ENCODE measurements at regions of chr12 and their contacts with region 1.

Region 1: DNA sequence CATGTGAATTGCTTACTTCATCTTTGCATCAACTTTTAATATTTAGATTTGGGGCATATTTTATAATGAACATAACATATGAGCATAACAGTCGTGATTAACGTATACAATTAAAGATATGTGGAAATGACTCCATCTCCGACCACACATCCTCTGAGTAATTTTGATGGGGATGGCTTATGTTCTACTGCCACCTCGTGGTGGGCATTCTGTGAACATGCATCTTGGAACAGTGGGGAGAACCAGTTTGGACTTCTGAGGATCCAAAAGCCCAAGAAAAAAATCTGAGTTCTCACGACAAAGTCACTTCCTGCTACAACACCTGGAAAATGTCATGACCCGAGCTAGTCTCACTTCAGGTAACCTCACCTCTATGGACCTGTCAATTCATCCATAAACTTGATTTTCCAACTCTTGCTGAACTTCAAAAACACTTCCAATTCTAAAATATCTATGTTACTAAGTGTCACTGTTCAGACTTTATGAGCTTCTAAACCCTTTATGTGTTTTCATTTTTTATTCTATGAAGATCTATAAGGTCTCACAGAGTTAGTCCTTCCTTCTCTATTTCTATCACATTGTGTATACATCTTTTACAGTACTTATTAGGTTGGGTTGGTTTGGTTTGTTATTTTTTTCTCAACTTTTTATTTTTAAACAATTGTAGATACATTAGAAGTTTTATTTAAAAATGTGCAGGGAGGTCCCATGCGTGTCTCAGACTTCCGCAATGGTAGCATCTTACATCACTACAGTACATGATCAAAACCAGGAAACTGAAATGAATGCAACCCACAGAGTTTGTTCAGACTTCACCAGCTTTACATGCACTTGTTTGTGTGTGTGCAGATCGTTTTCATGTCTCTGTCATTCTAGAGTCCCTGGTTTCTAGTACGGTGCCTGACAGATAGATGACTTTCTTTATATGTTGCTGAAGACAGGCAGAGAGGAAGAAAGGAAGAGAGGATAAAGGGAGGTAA is 38.2 kb upstream of the STAB2 start:
- DNase-seq: peak; percentile 66
- H3K4me3 ChIP-seq: no peak overlapping the region
- H3K27ac ChIP-seq: no peak overlapping the region
- H3K4me1 ChIP-seq: no peaks in the 10 kb centered on the region
- H3K27me3 ChIP-seq: no peaks in the 10 kb centered on the region
- CTCF ChIP-seq: peak; percentile 74

Region 2: DNA sequence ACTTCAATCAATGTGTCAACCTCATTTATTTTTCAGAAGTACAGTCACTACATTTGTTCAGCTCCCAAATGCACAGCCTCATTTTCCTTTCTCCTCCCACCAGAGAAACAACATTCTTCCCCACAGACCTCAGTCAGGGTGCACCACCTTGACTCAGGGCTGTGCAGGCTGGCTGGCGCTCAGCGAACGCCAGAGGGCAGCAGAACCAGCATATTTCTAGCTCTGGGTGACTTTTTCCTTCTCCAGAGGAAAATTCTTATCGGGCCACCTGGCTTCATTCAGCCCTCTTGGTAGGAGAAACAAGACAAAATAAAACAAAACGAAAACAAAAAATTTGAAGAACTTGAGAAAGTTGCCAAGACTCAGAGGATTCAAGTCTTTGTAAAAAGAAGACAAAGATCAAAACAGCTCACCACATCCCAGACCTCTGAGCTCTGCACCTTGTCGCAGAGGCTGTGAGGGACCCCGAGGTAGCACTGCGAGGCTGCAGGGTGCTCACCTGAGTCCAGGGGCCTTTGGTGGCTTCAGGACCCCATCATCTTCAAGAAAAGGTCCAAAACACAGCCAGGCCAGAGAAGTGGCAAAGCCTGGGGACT is 665.6 kb before region 1 on chr12:
- intact Hi-C with region 1: loop called (anchors 2 kb)
- DNase-seq: peak; percentile 37
- H3K4me3 ChIP-seq: no peak overlapping the region
- H3K27ac ChIP-seq: no peak overlapping the region
- H3K4me1 ChIP-seq: no peaks in the 10 kb centered on the region
- H3K27me3 ChIP-seq: no peaks in the 10 kb centered on the region
- CTCF ChIP-seq: peak; percentile 78

Region 3: GRCh38 chr12:102948941-102949352 is 600.0 kb before region 1 on chr12:
- intact Hi-C with region 1: loop called (anchors 2 kb)
- DNase-seq: peak; percentile 46
- H3K4me3 ChIP-seq: no peak overlapping the region
- H3K27ac ChIP-seq: no peak overlapping the region
- H3K4me1 ChIP-seq: no peaks in the 10 kb centered on the region
- H3K27me3 ChIP-seq: peaks cover 26% of the 10 kb centered on the region
- CTCF ChIP-seq: peak; percentile 96